HEK293T (cell line): ENCODE measurements at regions of chr22 and their contacts with region 1.

Region 1: GRCh38 chr22:20981787-20982562 is at the start of gene LZTR1:
- DNase-seq: peak; percentile 91

Region 2: GRCh38 chr22:20725987-20726558 is 255.9 kb before region 1 on chr22:
- CTCF ChIA-PET with region 1: no interaction called
- POLR2A ChIA-PET with region 1: no interaction called
- DNase-seq: no peak

Region 3: DNA sequence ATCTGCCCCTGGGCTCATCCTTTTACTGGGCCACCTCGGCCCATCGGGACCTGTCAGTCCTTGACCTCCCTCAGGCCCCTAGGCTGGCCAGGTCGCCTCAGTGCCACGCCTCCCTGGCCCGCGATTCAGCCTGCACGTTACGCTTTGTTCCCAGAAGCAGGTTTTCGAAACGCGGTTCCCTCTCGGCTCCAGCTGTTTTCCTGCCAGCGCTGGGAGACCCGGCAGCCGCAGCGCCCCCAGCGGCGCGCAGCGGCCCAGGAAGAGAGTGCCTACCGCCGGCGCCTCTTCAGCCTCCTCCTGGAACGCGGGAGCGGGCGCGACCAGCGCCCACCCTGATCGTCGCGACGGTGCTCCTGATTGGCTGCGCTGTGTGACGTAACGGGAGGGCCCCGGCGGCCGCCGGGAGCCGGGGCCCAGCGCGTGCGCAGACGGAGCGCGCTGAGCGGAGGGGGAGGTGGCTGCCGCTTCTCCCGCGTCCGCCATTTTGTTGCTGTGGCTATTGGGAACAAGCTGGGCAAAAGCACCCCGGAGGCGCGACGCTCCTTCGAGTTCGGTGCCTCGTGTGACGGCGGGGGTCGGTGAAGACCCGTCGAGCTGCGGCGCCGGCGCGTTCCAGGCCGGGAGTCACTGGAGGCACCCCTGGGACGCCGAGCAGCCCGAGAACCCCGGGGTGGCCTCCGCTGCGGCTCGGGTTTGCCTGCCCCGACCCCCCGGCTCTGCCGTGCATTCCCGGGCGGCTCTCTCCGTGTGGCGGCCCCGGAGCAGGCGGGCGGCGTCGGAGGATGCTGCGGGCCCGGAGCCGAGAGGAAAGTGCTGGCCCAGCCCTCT is 64.8 kb before region 1 on chr22 and contains the start of gene CRKL:
- CTCF ChIA-PET with region 1: no interaction called
- POLR2A ChIA-PET with region 1: interaction called, 24 read pairs
- DNase-seq: peak; percentile 100

Region 4: DNA sequence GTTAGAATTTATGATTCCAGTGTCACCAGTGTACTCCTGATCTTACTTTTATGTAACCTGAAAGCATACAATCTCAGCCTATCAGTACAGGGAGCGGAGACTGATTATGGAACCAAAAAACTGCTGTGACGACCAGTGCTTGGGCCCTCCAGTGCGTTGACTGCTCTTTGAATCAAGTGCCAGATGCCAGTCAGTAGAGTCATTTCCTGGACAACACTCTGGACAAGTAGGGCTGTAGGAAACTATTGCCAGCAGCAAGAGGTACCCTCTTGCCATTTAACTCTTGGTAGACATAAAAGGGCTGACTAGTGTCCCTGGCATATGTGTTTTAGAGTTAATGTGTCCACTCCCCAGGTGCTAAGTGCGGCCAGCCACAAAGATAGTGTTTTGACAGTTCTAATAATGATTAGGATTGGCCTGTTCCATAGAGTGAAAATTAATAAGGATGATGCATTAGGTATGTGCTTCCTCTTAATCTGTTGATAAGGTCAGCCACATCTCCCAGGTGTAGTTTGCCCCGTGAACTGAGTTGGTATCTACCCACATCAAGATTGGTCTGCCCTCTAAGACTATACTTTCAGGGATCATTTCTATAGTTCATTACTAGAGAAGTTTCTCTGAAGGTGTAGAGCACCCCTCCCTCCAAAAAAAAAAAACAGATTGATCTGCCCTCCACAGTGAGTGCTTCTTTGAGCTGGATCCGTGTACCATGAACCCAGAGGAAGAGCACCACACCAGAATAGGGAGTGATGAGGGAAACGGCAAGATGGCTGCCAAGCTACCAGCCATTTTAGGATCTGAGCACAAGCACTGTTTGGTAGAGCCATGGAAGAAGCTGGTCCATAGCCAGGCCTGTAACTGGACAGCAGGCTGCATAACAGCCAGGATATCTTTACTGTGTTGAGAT is 35.6 kb before region 1 on chr22:
- CTCF ChIA-PET with region 1: interaction called, 10 read pairs
- POLR2A ChIA-PET with region 1: interaction called, 6 read pairs
- DNase-seq: no peak

Region 5: GRCh38 chr22:21001560-21002325 is 19.8 kb after region 1 on chr22 and contains the start of gene THAP7:
- CTCF ChIA-PET with region 1: no interaction called
- POLR2A ChIA-PET with region 1: interaction called, 121 read pairs
- DNase-seq: peak; percentile 96

Region 6: GRCh38 chr22:21102659-21103267 is 120.8 kb after region 1 on chr22:
- CTCF ChIA-PET with region 1: interaction called, 7 read pairs
- POLR2A ChIA-PET with region 1: interaction called, 30 read pairs
- DNase-seq: peak; percentile 96